ENCODE measurements at regions of chr9 and their contacts with region 1.

Region 1: DNA sequence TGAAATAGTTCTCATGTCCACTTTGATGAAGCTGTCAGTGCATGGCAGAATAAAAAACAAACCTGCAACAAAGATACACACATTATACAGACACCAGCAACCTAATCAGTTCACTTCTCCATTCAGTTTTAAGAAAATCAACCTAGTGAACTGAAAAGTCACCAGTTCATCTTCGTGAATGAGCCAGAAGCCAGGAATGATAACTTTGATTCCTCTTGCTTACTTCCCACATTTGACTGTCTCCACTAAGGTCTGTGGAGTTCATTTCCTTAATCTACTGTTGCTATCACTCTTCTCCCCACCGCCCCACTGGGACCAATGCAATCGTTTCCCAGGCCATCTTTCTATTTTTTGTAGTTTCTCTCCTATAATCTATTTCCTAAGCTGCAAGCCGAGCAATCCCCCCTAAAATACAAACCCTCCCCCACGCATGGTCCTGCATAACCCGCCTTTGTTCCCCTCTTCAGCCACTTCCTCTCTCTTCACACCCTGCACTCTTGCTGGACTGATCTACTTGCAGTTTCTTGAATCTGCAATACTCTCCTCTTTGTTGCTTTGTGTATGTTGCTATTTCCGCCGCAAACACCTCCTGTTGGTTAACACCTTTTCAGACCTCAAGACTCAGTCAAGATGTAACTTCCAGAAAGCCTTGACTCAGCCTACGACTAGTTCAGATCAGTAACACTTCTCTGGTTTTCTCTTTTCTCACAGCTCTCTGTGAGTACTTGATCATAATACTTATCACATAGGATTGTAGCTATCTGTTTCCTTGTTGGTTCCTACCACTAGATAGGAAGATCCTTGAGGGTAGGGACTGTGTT is 16.6 kb downstream of the STOM start:
- DNase-seq: peak; percentile 67 to 88
- ATAC-seq: peak; percentile 84 to 94 (median 92)
- H3K4me3 ChIP-seq: peak overlapping the region; percentile 11
- H3K4me3 Mint-ChIP-seq: peak overlapping the region; percentile 80
- H3K27ac ChIP-seq: peak overlapping the region; percentile 84
- H3K27ac Mint-ChIP-seq: peak overlapping the region; percentile 87 to 93
- H3K4me1 ChIP-seq: peaks cover 58% of the 10 kb centered on the region
- H3K4me1 Mint-ChIP-seq: peaks cover 75 to 86% of the 10 kb centered on the region in 2 donors
- H3K27me3 ChIP-seq: no peaks in the 10 kb centered on the region
- H3K27me3 Mint-ChIP-seq: no peaks in the 10 kb centered on the region
- CTCF ChIP-seq: no peak

Region 2: GRCh38 chr9:121261107-121261460 is 92.4 kb before region 1 on chr9:
- intact Hi-C with region 1: no loop called
- DNase-seq: no peak
- ATAC-seq: no peak
- H3K4me3 ChIP-seq: no peak overlapping the region
- H3K4me3 Mint-ChIP-seq: no peak overlapping the region
- H3K27ac ChIP-seq: no peak overlapping the region
- H3K27ac Mint-ChIP-seq: no peak overlapping the region
- H3K4me1 ChIP-seq: no peaks in the 10 kb centered on the region
- H3K4me1 Mint-ChIP-seq: no peaks in the 10 kb centered on the region
- H3K27me3 ChIP-seq: no peaks in the 10 kb centered on the region
- H3K27me3 Mint-ChIP-seq: peaks cover 2 to 6% of the 10 kb centered on the region in 2 donors
- CTCF ChIP-seq: no peak

Region 3: GRCh38 chr9:121369595-121370265 is 16.3 kb after region 1 on chr9 and contains the start of gene STOM:
- intact Hi-C with region 1: loop called (anchors 1 kb)
- DNase-seq: peak in 1 of 2 donors; percentile 86
- ATAC-seq: peak; percentile 52 to 69 (median 63)
- H3K4me3 ChIP-seq: peak within 1 kb of the TSS; percentile 88
- H3K4me3 Mint-ChIP-seq: peak within 1 kb of the TSS; percentile 96
- H3K27ac ChIP-seq: peak within 1 kb of the TSS; percentile 75
- H3K27ac Mint-ChIP-seq: peak within 1 kb of the TSS; percentile 93 to 94
- H3K4me1 ChIP-seq: peaks cover 21% of the 10 kb centered on the region
- H3K4me1 Mint-ChIP-seq: peaks cover 54 to 69% of the 10 kb centered on the region in 2 donors
- H3K27me3 ChIP-seq: no peaks in the 10 kb centered on the region
- H3K27me3 Mint-ChIP-seq: no peaks in the 10 kb centered on the region
- CTCF ChIP-seq: no peak
- total RNA-seq, gene STOM: 185 to 241 (median 189) TPM

Region 4: GRCh38 chr9:121439711-121440664 is 86.5 kb after region 1 on chr9:
- intact Hi-C with region 1: no loop called
- DNase-seq: no peak
- ATAC-seq: no peak
- H3K4me3 ChIP-seq: no peak overlapping the region
- H3K4me3 Mint-ChIP-seq: no peak overlapping the region
- H3K27ac ChIP-seq: no peak overlapping the region
- H3K27ac Mint-ChIP-seq: no peak overlapping the region
- H3K4me1 ChIP-seq: no peaks in the 10 kb centered on the region
- H3K4me1 Mint-ChIP-seq: no peaks in the 10 kb centered on the region
- H3K27me3 ChIP-seq: no peaks in the 10 kb centered on the region
- H3K27me3 Mint-ChIP-seq: peaks cover 19 to 20% of the 10 kb centered on the region in 2 donors
- CTCF ChIP-seq: no peak